Mammary epithelial cell (primary cell): ENCODE measurements at regions of chr2 and their contacts with region 1.

Region 1: GRCh38 chr2:239035361-239036078 is 187.6 kb downstream of the TWIST2 start:
- DNase-seq: no peak
- H3K4me3 ChIP-seq: no peak overlapping the region
- H3K27ac ChIP-seq: no peak overlapping the region
- H3K4me1 ChIP-seq: no peaks in the 10 kb centered on the region
- H3K27me3 ChIP-seq: peaks cover 9% of the 10 kb centered on the region
- CTCF ChIP-seq: peak; percentile 37 to 89

Region 2: GRCh38 chr2:239093952-239094351 is 58.4 kb after region 1 on chr2:
- CTCF ChIA-PET with region 1: no interaction called
- dilution Hi-C with region 1: loop called (anchors 5 kb)
- in situ Hi-C with region 1: no loop called
- intact Hi-C with region 1: no loop called
- DNase-seq: no peak
- H3K4me3 ChIP-seq: no peak overlapping the region
- H3K27ac ChIP-seq: no peak overlapping the region
- H3K4me1 ChIP-seq: no peaks in the 10 kb centered on the region
- H3K27me3 ChIP-seq: no peaks in the 10 kb centered on the region
- CTCF ChIP-seq: no peak

Region 3: GRCh38 chr2:239106314-239106908 is 70.9 kb after region 1 on chr2:
- CTCF ChIA-PET with region 1: no interaction called
- dilution Hi-C with region 1: no loop called
- in situ Hi-C with region 1: no loop called
- intact Hi-C with region 1: loop called (anchors 1 kb)
- DNase-seq: peak; percentile 43
- H3K4me3 ChIP-seq: no peak overlapping the region
- H3K27ac ChIP-seq: no peak overlapping the region
- H3K4me1 ChIP-seq: peaks cover 9% of the 10 kb centered on the region
- H3K27me3 ChIP-seq: no peaks in the 10 kb centered on the region
- CTCF ChIP-seq: peak; percentile 45 to 77

Region 4: DNA sequence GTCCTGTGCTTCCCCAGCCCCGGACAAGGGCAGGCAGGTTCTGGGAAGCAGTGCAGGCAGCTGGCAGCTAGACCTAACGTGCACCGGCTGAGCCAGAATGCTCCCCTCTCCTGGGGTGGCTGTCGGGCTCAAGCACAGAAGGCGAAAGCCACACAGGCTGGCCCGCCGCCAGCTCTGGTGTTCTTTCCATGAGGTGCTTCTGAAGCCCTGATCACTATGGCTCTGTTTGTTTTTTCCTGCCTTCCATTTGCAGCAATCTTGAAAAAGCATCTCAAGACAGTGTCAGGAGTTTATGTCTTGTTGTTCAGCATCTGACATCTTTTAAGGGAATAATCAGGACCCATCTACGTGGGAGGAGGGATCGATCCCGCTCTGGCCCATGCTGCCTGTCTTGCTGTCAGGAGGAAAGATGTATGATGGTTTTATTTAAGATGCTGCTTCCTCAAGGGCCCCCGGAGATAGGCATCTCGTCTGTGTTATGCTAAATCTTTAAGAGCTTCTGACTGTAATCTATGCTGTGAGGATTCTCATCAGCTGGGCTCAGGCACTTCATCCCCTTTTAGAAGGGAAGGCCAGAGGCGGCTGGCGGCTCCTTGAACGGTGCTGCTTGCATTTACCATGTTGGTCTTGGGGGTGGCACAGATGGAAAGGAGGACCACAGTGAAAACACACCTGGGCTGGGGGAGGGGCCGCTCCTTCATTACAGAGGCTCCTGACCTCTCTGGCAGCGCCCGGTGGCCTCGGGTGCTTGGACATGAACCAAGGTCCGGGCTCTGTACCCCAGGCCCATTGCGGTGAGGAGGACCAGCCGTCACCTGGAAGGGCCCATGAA is 483.8 kb after region 1 on chr2:
- CTCF ChIA-PET with region 1: no interaction called
- dilution Hi-C with region 1: no loop called
- in situ Hi-C with region 1: no loop called
- intact Hi-C with region 1: no loop called
- DNase-seq: no peak
- H3K4me3 ChIP-seq: no peak overlapping the region
- H3K27ac ChIP-seq: no peak overlapping the region
- H3K4me1 ChIP-seq: no peaks in the 10 kb centered on the region
- H3K27me3 ChIP-seq: no peaks in the 10 kb centered on the region
- CTCF ChIP-seq: no peak